ENCODE measurements at regions of chr3 and their contacts with region 1.

Region 1: GRCh38 chr3:142279965-142280590 is 54.7 kb upstream of the GK5 start:
- H3K4me3 ChIP-seq: no peak overlapping the region
- H3K27ac ChIP-seq: no peak overlapping the region
- H3K4me1 ChIP-seq: no peaks in the 10 kb centered on the region
- CTCF ChIP-seq: peak; percentile 59

Region 2: DNA sequence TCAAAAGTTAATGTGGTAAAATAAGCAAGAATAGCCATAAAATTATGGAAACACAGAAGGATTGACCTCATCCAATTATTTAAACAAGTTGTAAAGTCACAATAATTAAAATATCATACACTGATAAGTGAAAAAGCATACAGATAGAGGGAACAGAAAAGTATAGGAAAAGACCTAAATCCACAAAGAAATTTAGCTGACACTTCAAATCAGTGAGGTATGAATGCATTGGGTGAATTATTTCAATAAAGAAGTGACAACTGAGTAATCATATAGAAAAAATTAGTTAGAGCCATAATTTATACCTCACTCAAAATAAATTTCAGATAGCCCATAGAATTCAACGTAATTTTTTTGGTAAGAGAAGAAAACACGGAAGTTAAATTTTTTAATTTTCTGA is 155.8 kb before region 1 on chr3:
- CTCF ChIA-PET with region 1: interaction called, 25 read pairs
- POLR2A ChIA-PET with region 1: no interaction called
- H3K4me3 ChIP-seq: no peak overlapping the region
- H3K27ac ChIP-seq: no peak overlapping the region
- H3K4me1 ChIP-seq: no peaks in the 10 kb centered on the region
- CTCF ChIP-seq: no peak

Region 3: GRCh38 chr3:142180761-142181362 is 99.2 kb before region 1 on chr3:
- CTCF ChIA-PET with region 1: interaction called, 12 read pairs
- POLR2A ChIA-PET with region 1: no interaction called
- H3K4me3 ChIP-seq: no peak overlapping the region
- H3K27ac ChIP-seq: no peak overlapping the region
- H3K4me1 ChIP-seq: no peaks in the 10 kb centered on the region
- CTCF ChIP-seq: no peak

Region 4: DNA sequence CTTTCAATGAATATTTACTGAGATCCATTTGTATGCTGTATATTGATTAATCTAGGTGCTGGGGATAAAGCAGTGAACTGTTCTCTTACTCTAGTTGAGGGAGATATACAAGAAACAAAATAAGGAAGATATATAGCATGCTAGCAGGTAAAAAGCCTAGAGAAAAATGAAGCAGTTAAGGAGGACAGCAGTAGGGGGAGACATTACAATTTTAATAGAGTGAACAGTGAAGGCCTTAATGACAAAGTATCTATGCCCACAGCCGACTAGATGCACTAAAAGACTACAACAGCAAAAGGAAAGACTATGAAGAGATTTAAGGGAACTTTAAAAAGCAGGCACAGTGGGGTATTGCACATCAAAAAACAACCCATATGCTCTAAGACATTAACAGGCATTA is 86.4 kb after region 1 on chr3:
- CTCF ChIA-PET with region 1: no interaction called
- POLR2A ChIA-PET with region 1: no interaction called
- H3K4me3 ChIP-seq: no peak overlapping the region
- H3K27ac ChIP-seq: no peak overlapping the region
- H3K4me1 ChIP-seq: no peaks in the 10 kb centered on the region
- CTCF ChIP-seq: no peak

Region 5: GRCh38 chr3:142385078-142385477 is 105.0 kb after region 1 on chr3:
- CTCF ChIA-PET with region 1: no interaction called
- POLR2A ChIA-PET with region 1: no interaction called
- H3K4me3 ChIP-seq: no peak overlapping the region
- H3K27ac ChIP-seq: no peak overlapping the region
- H3K4me1 ChIP-seq: no peaks in the 10 kb centered on the region
- CTCF ChIP-seq: no peak